Naive thymus-derived CD4-positive, alpha-beta T cell (primary cell): ENCODE measurements at regions of chr10 and their contacts with region 1.

Region 1: GRCh38 chr10:114173921-114174694 is at the start of gene CCDC186:
- DNase-seq: peak; percentile 90 to 98 (median 97)
- ATAC-seq: peak; percentile 98
- H3K4me3 ChIP-seq: peak within 1 kb of the TSS; percentile 83
- H3K4me3 Mint-ChIP-seq: peak within 1 kb of the TSS; percentile 88 to 100 (median 96)
- H3K27ac ChIP-seq: peak within 1 kb of the TSS; percentile 88
- H3K27ac Mint-ChIP-seq: peak within 1 kb of the TSS; percentile 92 to 99 (median 98)
- H3K4me1 ChIP-seq: peaks cover 0 to 8% of the 10 kb centered on the region in 2 donors
- H3K4me1 Mint-ChIP-seq: peaks cover 17 to 51% (median 33%) of the 10 kb centered on the region in 7 donors
- H3K27me3 ChIP-seq: no peaks in the 10 kb centered on the region
- H3K27me3 Mint-ChIP-seq: peaks cover 0 to 24% (median 0%) of the 10 kb centered on the region in 5 donors
- total RNA-seq, gene CCDC186: 18.6 to 42.9 (median 34.5) TPM

Region 2: GRCh38 chr10:112375721-112376395 is 1798.2 kb before region 1 on chr10:
- CTCF ChIA-PET with region 1: no interaction called
- POLR2A ChIA-PET with region 1: no interaction called
- intact Hi-C with region 1: loop called in 1 of 2 experiments (anchors 10 kb)
- DNase-seq: peak; percentile 33 to 70 (median 59)
- ATAC-seq: peak; percentile 87
- H3K4me3 ChIP-seq: peak overlapping the region; percentile 89
- H3K4me3 Mint-ChIP-seq: peak overlapping the region; percentile 95 to 100 (median 100)
- H3K27ac ChIP-seq: peak overlapping the region; percentile 95
- H3K27ac Mint-ChIP-seq: peak overlapping the region; percentile 97 to 100 (median 99)
- H3K4me1 ChIP-seq: peaks cover 11 to 21% of the 10 kb centered on the region in 2 donors
- H3K4me1 Mint-ChIP-seq: peaks cover 36 to 72% (median 61%) of the 10 kb centered on the region in 7 donors
- H3K27me3 ChIP-seq: no peaks in the 10 kb centered on the region
- H3K27me3 Mint-ChIP-seq: no peaks in the 10 kb centered on the region

Region 3: DNA sequence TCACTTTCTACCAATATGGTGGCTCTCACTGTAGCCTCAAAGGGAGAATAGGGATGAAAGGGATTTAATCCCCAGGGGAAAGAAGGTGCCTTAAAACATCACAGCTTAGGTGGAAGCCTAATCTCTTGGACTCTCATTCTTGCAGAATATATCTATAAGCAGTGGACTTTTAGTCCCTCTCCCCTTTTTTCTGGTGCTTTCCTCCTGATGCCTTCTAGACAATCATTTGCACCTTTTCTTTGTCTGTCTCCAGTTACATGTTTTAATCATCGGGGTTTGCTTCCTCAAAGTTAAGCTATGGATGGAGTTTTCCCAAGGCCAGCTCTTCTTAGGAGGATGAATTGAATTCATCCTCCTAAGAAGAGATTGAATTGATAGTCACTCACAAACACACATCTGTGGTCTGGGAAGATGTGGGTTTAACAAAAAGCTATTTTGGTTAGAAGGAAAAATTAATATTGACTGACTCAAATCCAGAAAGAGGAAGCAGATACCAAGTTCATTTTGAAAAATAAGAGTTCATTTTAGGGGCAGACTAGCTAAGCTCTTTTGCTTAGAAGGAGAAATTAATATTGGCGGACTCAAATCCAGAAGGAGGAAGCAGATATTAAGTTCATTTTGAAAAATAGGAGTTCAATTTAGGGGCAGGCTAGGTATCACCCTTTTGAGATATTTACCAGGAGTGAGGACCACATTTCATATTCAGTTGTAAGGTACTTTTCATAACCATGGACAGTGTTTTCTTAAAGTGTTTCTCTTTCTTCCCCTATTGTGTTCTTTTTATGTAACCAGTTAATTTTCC is 457.8 kb before region 1 on chr10:
- CTCF ChIA-PET with region 1: no interaction called
- POLR2A ChIA-PET with region 1: no interaction called
- intact Hi-C with region 1: no loop called
- DNase-seq: no peak
- ATAC-seq: no peak
- H3K4me3 ChIP-seq: no peak overlapping the region
- H3K4me3 Mint-ChIP-seq: no peak overlapping the region
- H3K27ac ChIP-seq: no peak overlapping the region
- H3K27ac Mint-ChIP-seq: no peak overlapping the region
- H3K4me1 ChIP-seq: no peaks in the 10 kb centered on the region
- H3K4me1 Mint-ChIP-seq: peaks cover 0 to 5% (median 0%) of the 10 kb centered on the region in 7 donors
- H3K27me3 ChIP-seq: no peaks in the 10 kb centered on the region
- H3K27me3 Mint-ChIP-seq: no peaks in the 10 kb centered on the region

Region 4: GRCh38 chr10:113854011-113854760 is 319.9 kb before region 1 on chr10 and contains the starts of genes DCLRE1A and NHLRC2:
- CTCF ChIA-PET with region 1: no interaction called
- POLR2A ChIA-PET with region 1: interaction called, 3 read pairs
- intact Hi-C with region 1: loop called (anchors 1 kb)
- DNase-seq: peak; percentile 26 to 55 (median 50)
- ATAC-seq: peak; percentile 73
- H3K4me3 ChIP-seq: peak within 1 kb of the TSS; percentile 90
- H3K4me3 Mint-ChIP-seq: peak within 1 kb of the TSS; percentile 90 to 100 (median 97)
- H3K27ac ChIP-seq: peak within 1 kb of the TSS; percentile 79
- H3K27ac Mint-ChIP-seq: peak within 1 kb of the TSS; percentile 89 to 100 (median 97)
- H3K4me1 ChIP-seq: peaks cover 3 to 42% of the 10 kb centered on the region in 2 donors
- H3K4me1 Mint-ChIP-seq: peaks cover 24 to 60% (median 52%) of the 10 kb centered on the region in 7 donors
- H3K27me3 ChIP-seq: no peaks in the 10 kb centered on the region
- H3K27me3 Mint-ChIP-seq: no peaks in the 10 kb centered on the region
- total RNA-seq, gene DCLRE1A: 1.5 to 12.9 (median 4.3) TPM
- total RNA-seq, gene NHLRC2: 10.3 to 25.9 (median 20.5) TPM

Region 5: DNA sequence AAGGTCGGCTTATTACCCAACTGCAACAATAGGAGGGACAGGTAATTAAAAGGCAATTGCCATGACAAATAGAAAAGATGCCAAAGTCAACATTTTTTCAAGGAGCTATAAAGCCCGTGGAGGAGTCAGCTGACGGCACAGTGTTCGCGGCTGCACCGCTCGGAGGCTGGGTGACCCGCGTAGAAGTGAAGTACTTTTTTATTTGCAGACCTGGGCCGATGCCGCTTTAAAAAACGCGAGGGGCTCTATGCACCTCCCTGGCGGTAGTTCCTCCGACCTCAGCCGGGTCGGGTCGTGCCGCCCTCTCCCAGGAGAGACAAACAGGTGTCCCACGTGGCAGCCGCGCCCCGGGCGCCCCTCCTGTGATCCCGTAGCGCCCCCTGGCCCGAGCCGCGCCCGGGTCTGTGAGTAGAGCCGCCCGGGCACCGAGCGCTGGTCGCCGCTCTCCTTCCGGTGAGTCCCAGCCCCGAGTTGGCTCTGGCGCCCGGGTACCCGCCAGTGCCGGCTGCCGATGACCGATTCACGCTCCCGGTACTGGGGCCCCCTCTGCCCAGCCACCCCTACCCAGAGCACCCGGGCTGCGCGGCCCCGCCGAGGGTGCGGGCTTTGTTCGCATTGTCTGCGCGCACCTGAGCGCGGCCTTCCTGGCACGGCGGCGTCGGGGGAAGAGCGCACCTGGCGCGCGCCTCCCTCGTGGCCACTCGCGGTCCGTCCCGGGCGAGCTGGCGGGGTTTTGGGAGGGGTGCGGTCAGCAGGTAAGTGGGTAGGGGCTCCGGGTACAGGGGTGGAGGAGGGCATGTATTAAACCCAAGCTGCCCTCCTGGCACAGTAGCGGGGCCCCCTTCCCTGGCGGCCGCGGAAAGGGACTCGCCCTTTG is 65.2 kb after region 1 on chr10 and contains the start of gene VWA2:
- CTCF ChIA-PET with region 1: no interaction called
- POLR2A ChIA-PET with region 1: no interaction called
- intact Hi-C with region 1: no loop called
- DNase-seq: peak in 5 of 9 donors; percentile 4 to 14 (median 6)
- ATAC-seq: peak; percentile 31
- H3K4me3 ChIP-seq: no peak within 1 kb of the TSS
- H3K4me3 Mint-ChIP-seq: peak within 1 kb of the TSS in 8 of 10 donors; percentile 23 to 69 (median 57)
- H3K27ac ChIP-seq: no peak within 1 kb of the TSS
- H3K27ac Mint-ChIP-seq: no peak within 1 kb of the TSS
- H3K4me1 ChIP-seq: no peaks in the 10 kb centered on the region
- H3K4me1 Mint-ChIP-seq: peaks cover 0 to 9% (median 4%) of the 10 kb centered on the region in 7 donors
- H3K27me3 ChIP-seq: peaks cover 0 to 4% of the 10 kb centered on the region in 2 donors
- H3K27me3 Mint-ChIP-seq: peaks cover 62 to 70% (median 66%) of the 10 kb centered on the region in 5 donors
- total RNA-seq, gene VWA2: 0.11 to 0.27 TPM in 2 of 5 experiments, not detected in the others

Region 6: DNA sequence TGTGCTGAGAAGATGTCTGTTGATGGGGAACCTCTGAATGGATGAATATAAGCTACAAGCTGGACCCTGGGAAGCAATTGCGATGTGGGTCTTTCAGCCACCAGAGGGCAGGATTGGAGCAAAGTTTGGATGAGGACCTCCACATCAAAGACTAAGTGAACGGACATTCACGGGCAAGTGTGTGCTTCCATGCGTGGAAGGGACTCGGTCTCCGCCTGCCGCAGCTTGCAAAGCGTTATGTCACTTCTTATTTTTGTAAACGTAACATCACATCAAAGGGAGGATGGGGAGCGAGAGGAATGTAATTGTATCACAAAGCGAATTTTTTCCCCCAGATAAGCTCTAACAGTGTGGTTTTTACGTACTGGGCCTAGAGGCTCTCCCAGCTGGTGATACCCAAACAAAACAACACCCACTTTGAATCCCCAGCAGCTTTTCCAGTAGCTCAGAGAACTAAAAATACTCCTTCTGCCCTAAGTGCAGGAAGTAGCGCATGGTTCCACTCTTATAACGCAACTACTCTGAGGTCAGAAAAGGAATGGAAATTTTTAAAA is 130.0 kb after region 1 on chr10:
- CTCF ChIA-PET with region 1: no interaction called
- POLR2A ChIA-PET with region 1: no interaction called
- intact Hi-C with region 1: loop called in 1 of 2 experiments (anchors 1 kb)
- DNase-seq: peak; percentile 19 to 67 (median 52)
- ATAC-seq: peak; percentile 60
- H3K4me3 ChIP-seq: peak overlapping the region; percentile 68
- H3K4me3 Mint-ChIP-seq: peak overlapping the region; percentile 83 to 94 (median 92)
- H3K27ac ChIP-seq: peak overlapping the region; percentile 6
- H3K27ac Mint-ChIP-seq: peak overlapping the region in 8 of 9 donors; percentile 4 to 86 (median 68)
- H3K4me1 ChIP-seq: peaks cover 4 to 5% of the 10 kb centered on the region in 2 donors
- H3K4me1 Mint-ChIP-seq: peaks cover 9 to 13% (median 12%) of the 10 kb centered on the region in 7 donors
- H3K27me3 ChIP-seq: no peaks in the 10 kb centered on the region
- H3K27me3 Mint-ChIP-seq: no peaks in the 10 kb centered on the region

Region 7: GRCh38 chr10:114550756-114551635 is 376.9 kb after region 1 on chr10:
- CTCF ChIA-PET with region 1: no interaction called
- POLR2A ChIA-PET with region 1: no interaction called
- intact Hi-C with region 1: loop called in 1 of 2 experiments (anchors 1 kb)
- DNase-seq: peak in 5 of 9 donors; percentile 33 to 50 (median 40)
- ATAC-seq: peak; percentile 26
- H3K4me3 ChIP-seq: no peak overlapping the region
- H3K4me3 Mint-ChIP-seq: no peak overlapping the region
- H3K27ac ChIP-seq: no peak overlapping the region
- H3K27ac Mint-ChIP-seq: peak overlapping the region in 5 of 9 donors; percentile 1 to 61 (median 20)
- H3K4me1 ChIP-seq: peaks cover 6 to 29% of the 10 kb centered on the region in 2 donors
- H3K4me1 Mint-ChIP-seq: peaks cover 16 to 37% (median 33%) of the 10 kb centered on the region in 7 donors
- H3K27me3 ChIP-seq: no peaks in the 10 kb centered on the region
- H3K27me3 Mint-ChIP-seq: peaks cover 0 to 5% (median 0%) of the 10 kb centered on the region in 5 donors